ENCODE measurements at regions of chr10 and their contacts with region 1.

Region 1: DNA sequence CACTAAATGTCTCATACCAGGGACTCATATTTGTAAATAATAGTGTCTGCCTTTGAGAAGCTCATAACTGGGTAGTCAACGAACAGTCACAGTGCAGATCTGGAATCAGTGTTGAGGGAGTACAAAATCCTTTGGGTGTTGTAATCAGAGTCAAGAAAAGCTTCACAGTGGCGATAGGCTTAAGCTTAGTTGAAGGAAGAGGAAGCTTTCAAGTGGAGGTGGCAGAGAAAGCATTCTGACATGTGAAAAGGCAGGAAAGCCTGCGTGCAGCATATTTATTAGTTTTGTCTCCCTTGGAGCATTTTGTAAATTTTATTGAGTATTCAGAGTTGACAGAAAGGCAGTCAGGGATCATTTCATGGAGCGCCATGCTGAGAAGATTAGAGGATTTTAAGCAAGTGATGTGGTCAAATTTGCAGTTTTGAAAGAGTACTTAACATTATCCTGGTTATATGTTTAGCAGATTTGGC is 104.9 kb downstream of the ADK start:
- DNase-seq: peak; percentile 96
- H3K4me3 ChIP-seq: no peak overlapping the region
- H3K27ac ChIP-seq: peak overlapping the region; percentile 27
- H3K4me1 ChIP-seq: peaks cover 38% of the 10 kb centered on the region
- H3K27me3 ChIP-seq: no peaks in the 10 kb centered on the region
- CTCF ChIP-seq: no peak

Region 2: DNA sequence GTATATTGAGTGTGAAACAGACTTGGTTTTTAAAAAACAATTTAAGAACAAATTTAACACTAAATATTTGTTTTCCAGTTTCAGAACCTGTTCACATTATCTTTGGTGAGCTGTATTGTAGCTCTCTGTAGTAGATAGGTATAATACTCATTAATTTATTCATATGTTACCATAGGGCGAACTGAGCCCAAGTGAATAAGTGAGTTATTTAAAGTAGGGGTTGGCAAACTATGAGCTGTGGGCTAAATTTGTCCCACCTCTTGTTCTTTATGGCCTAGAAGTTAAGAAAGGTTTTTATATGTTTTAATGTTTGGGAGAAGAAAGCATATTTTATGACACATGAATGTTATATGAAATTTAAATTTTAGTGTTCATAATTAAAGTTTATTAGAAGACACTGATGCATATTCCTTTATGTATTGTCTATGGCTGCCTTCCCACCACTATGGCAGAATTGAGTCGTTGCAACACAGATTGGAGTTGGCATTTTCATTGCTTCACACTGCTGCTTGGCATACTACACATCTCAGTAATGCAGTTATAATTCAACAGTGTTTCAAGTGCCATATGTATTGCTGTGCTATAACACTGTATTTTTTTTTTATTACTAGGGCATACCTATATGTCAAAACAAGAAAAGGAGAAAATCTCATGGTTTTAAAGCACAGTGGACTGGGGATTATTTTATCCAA is 41.6 kb after region 1 on chr10:
- CTCF ChIA-PET with region 1: no interaction called
- POLR2A ChIA-PET with region 1: interaction called, 8 read pairs
- intact Hi-C with region 1: loop called (anchors 5 kb)
- DNase-seq: no peak
- H3K4me3 ChIP-seq: no peak overlapping the region
- H3K27ac ChIP-seq: peak overlapping the region; percentile 31
- H3K4me1 ChIP-seq: peaks cover 30% of the 10 kb centered on the region
- H3K27me3 ChIP-seq: no peaks in the 10 kb centered on the region
- CTCF ChIP-seq: no peak

Region 3: GRCh38 chr10:74575191-74575720 is 319.3 kb after region 1 on chr10:
- CTCF ChIA-PET with region 1: no interaction called
- POLR2A ChIA-PET with region 1: no interaction called
- intact Hi-C with region 1: no loop called
- DNase-seq: no peak
- H3K4me3 ChIP-seq: no peak overlapping the region
- H3K27ac ChIP-seq: no peak overlapping the region
- H3K4me1 ChIP-seq: no peaks in the 10 kb centered on the region
- H3K27me3 ChIP-seq: no peaks in the 10 kb centered on the region
- CTCF ChIP-seq: no peak

Measured in A673 (cell line).